ENCODE measurements at regions of chr12 and their contacts with region 1.

Region 1: DNA sequence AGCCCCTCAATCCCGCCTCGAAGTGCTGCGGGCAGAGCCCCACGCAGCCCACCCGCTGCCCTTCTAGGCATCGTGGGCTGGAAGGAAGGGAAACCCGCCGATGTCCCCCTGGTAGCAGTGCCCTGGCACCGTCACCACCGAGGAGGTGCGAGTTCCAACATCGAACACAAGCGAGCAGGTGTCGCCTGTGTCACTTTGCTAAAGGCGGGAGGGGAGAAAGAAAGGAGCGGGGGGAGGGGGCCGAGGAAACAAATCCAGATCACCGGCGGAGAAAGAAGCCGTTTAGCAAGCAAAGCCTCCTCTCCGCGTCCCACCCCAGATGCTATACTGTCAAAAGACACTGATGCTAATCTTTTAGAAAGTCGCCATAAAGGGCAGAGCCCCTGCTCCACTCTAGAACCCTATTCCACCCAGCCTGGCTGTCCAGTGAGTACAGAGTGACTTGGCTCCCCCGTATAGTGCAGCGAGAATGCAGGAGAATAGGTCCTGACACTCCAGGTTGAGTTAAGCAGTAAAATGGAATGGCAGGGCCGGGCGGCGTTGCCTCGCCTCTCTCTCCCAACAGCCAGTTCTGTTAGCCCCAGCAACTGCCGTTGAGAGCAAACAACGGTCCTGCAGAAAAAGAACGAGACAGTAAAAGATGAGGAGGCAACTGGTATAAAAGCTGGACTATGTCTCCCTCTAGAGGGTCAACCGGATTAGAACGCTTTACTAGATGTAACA is 67.9 kb upstream of the USP15 start:
- DNase-seq: peak; percentile 65
- H3K4me3 Mint-ChIP-seq: peak overlapping the region; percentile 78
- H3K27ac Mint-ChIP-seq: no peak overlapping the region
- H3K4me1 Mint-ChIP-seq: peaks cover 14% of the 10 kb centered on the region
- H3K27me3 Mint-ChIP-seq: peaks cover 36% of the 10 kb centered on the region

Region 2: DNA sequence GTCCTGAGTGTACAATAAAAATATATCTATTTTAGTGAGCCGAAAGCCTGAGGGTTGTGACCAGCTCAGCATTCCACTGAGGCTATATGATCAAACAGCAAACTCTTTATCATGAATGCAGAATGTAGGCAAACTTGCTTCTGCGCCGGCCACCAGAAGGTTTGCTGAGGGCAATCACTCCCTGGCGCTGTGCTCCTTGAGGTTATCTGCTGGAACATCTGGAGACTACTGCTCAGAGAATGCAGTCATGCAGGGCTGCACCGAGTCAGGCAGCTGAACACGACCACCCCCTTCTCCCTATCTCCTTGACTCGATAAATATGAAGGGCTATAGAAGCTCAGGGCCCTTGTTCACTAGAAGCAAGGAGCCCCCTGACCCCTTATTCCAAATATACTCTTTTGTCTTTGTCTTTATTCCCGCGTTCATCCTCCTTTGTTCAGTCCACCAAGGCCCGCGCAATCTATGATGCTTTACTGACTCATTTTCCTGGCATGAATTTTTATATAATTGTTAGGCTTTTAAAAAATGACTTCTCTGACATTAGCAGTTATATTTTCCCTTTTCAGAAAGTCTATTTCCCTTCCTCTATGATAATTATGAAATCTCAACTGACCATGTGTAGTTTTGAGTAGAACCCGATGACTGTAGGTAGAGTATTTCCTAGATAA is 1507.2 kb before region 1 on chr12:
- CTCF ChIA-PET with region 1: no interaction called
- intact Hi-C with region 1: loop called (anchors 1 kb)
- DNase-seq: no peak
- H3K4me3 Mint-ChIP-seq: no peak overlapping the region
- H3K27ac Mint-ChIP-seq: no peak overlapping the region
- H3K4me1 Mint-ChIP-seq: no peaks in the 10 kb centered on the region
- H3K27me3 Mint-ChIP-seq: no peaks in the 10 kb centered on the region

Region 3: DNA sequence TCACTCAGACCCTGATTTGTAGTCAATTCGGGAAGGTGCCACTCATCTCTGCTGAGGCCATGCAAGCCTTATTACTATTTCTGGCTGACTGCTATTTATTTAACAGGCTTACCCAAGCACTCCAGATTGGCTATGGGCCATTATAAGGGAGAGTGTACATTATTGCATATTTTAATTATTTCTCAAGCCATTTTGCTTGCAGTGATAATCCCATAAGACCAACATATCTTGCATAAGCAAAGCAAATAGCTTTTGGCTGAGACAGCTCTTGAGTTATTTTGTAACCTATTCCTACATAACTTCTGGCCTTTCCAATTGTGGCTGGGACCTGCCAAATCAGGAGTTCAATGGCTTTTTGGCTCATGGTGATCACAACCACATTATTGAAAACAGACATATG is 441.7 kb before region 1 on chr12:
- CTCF ChIA-PET with region 1: no interaction called
- intact Hi-C with region 1: loop called (anchors 10 kb)
- DNase-seq: no peak
- H3K4me3 Mint-ChIP-seq: no peak overlapping the region
- H3K27ac Mint-ChIP-seq: no peak overlapping the region
- H3K4me1 Mint-ChIP-seq: no peaks in the 10 kb centered on the region
- H3K27me3 Mint-ChIP-seq: no peaks in the 10 kb centered on the region

Region 4: GRCh38 chr12:62006076-62006732 is 186.1 kb before region 1 on chr12:
- CTCF ChIA-PET with region 1: interaction called, 5 read pairs
- intact Hi-C with region 1: loop called (anchors 1 kb)
- DNase-seq: peak; percentile 43
- H3K4me3 Mint-ChIP-seq: no peak overlapping the region
- H3K27ac Mint-ChIP-seq: no peak overlapping the region
- H3K4me1 Mint-ChIP-seq: no peaks in the 10 kb centered on the region
- H3K27me3 Mint-ChIP-seq: peaks cover 3% of the 10 kb centered on the region

Region 5: DNA sequence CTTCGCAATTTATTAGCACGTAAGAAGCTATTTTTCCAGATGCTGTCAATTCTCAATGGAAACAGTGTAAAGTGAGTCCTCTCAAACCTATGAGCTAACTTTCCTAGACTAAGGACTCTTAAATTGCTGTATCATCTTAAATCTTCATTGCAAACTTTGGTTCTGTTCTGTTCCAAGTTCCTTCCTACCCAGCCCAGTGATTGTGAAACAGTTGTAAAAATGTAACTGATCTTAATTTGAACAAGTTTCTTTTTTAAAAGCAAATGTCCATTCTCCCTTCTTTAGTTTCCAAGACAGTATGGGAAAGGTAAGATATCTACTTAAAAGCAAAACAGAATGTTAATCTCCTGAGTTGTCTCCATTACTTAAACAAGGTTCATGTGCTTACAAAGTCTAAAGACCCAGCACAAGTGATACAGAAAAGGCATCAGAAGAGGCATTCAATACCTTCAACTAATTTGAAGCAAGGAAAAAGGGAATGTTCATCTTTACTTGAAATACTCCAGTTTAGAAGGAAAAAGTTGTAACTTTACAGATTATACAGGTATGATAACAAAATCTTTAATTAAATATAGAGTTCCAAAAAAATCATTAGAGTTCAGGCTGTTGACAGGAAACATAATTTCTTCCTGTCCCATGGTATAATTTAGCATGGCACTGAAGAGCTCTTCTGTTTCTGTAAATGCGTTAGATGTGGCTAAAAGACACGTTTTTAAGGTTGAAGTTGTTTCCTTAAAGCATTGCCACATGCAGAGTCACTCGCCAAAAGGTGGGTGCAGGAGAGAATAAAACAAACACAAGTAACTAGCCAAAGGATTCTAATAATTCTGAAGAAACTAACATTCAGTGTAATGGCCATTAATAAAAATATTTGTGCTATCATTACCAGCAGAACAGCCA is 33.6 kb before region 1 on chr12:
- CTCF ChIA-PET with region 1: no interaction called
- intact Hi-C with region 1: loop called (anchors 2 kb)
- DNase-seq: peak; percentile 15
- H3K4me3 Mint-ChIP-seq: peak overlapping the region; percentile 3
- H3K27ac Mint-ChIP-seq: no peak overlapping the region
- H3K4me1 Mint-ChIP-seq: peaks cover 30% of the 10 kb centered on the region
- H3K27me3 Mint-ChIP-seq: no peaks in the 10 kb centered on the region

Measured in activated naive CD4-positive, alpha-beta T cell treated with anti-CD3 and anti-CD28 coated beads for 36 hours (primary cell).